Ascending aorta (tissue), 2 donors: ENCODE measurements at regions of chr17 and their contacts with region 1.

Region 1: DNA sequence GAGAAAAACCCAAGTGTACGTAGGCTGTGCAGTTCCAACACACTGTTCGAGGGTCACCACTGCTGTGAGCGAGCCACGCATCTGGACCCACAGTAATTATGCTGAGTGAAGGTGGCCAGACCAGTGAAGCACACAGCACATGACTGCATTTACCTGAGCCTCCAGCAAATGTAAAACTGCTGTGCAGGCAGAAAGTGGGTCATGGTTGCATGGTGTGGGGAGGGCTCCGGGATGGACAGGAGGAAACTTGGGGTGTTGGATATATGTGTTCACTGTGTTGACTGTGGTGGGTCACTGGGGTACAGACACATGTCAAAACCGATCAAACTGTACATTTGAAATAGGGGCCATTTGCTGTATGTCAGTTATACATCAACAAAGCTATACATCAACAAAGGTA is 78.7 kb upstream of the METRNL start:
- DNase-seq: no peak
- H3K4me3 ChIP-seq: no peak overlapping the region
- H3K27ac ChIP-seq: no peak overlapping the region
- H3K4me1 ChIP-seq: no peaks in the 10 kb centered on the region
- H3K27me3 ChIP-seq: no peaks in the 10 kb centered on the region
- CTCF ChIP-seq: no peak

Region 2: GRCh38 chr17:82942166-82943130 is 58.3 kb before region 1 on chr17:
- intact Hi-C with region 1: loop called (anchors 2 kb)
- DNase-seq: no peak
- H3K4me3 ChIP-seq: no peak overlapping the region
- H3K27ac ChIP-seq: no peak overlapping the region
- H3K4me1 ChIP-seq: no peaks in the 10 kb centered on the region
- H3K27me3 ChIP-seq: no peaks in the 10 kb centered on the region
- CTCF ChIP-seq: no peak

Region 3: GRCh38 chr17:83051395-83052233 is 50.9 kb after region 1 on chr17:
- intact Hi-C with region 1: no loop called
- DNase-seq: peak; percentile 91 to 99
- H3K4me3 ChIP-seq: peak overlapping the region; percentile 63 to 98
- H3K27ac ChIP-seq: peak overlapping the region; percentile 83 to 84
- H3K4me1 ChIP-seq: peaks cover 8 to 17% of the 10 kb centered on the region in 2 donors
- H3K27me3 ChIP-seq: no peaks in the 10 kb centered on the region
- CTCF ChIP-seq: no peak